ENCODE measurements at regions of chr20 and their contacts with region 1.

Region 1: DNA sequence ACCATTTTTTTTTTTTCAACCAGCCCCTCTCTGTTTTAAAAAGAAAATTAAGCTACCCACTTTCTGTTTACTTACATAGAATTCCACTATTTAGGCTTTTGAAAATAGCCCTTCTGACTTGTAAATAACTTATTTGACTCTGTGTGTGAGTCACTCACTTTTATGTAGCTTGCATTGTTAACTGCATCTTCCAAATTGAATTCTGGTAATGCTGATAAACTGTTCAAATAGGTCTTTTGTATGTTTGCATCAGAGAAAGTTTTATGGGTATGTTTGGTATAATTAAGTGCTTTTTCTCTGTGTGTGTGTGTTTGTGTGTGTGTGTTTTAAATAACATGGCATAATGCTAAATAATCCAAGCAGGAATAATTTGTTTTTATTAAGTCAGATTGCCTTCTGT is 360.1 kb downstream of the PLCB1 start:
- DNase-seq: no peak
- ATAC-seq: no peak
- H3K4me3 ChIP-seq: no peak overlapping the region
- H3K27ac ChIP-seq: no peak overlapping the region
- H3K4me1 ChIP-seq: no peaks in the 10 kb centered on the region; the same call in 1 of the 2 replicates
- H3K27me3 ChIP-seq: no peaks in the 10 kb centered on the region
- CTCF ChIP-seq: no peak
- POLR2A ChIP-seq: no peak
- RAD21 ChIP-seq: no peak

Region 2: DNA sequence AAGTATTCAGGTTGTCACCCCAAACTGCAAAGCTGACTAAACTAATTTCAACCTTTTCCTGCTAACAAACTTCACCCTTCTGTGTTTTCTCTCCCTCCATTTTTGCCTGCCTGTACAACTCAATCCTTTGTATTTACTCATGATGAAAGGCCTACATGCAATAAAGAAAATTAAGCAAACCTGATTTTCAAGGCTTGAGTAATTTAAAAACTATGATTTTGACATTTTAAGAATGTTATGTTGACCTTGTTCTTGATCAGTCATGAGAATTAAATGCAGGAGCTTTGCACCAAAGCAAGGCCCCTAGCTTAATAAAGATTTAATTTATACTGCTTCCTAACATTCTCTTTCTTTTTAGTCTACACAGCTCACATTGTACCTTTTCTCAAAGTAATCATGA is 146.0 kb before region 1 on chr20:
- CTCF ChIA-PET with region 1: no interaction called
- POLR2A ChIA-PET with region 1: interaction called, 11 read pairs
- dilution Hi-C with region 1: no loop called
- in situ Hi-C with region 1: no loop called
- intact Hi-C with region 1: no loop called
- DNase-seq: no peak
- ATAC-seq: no peak
- H3K4me3 ChIP-seq: no peak overlapping the region
- H3K27ac ChIP-seq: no peak overlapping the region
- H3K4me1 ChIP-seq: peaks cover 1% of the 10 kb centered on the region; the same call in 1 of the 2 replicates
- H3K27me3 ChIP-seq: no peaks in the 10 kb centered on the region
- CTCF ChIP-seq: no peak
- POLR2A ChIP-seq: no peak
- RAD21 ChIP-seq: no peak

Measured in IMR-90 (cell line).